Right cardiac atrium (tissue), 5 donors: ENCODE measurements at regions of chr12 and their contacts with region 1.

Region 1: GRCh38 chr12:54005853-54006686 is 2.7 kb upstream of the HOXC8 start:
- DNase-seq: peak; percentile 83 to 95 (median 94)
- ATAC-seq: peak; percentile 86 to 91
- H3K4me3 ChIP-seq: peak overlapping the region; percentile 50
- H3K27ac ChIP-seq: no peak overlapping the region
- H3K4me1 ChIP-seq: peaks cover 2% of the 10 kb centered on the region
- H3K27me3 ChIP-seq: no peaks in the 10 kb centered on the region

Region 2: GRCh38 chr12:54201001-54201794 is 195.1 kb after region 1 on chr12:
- intact Hi-C with region 1: loop called (anchors 2 to 5 kb)
- DNase-seq: peak; percentile 46 to 80 (median 76)
- ATAC-seq: peak; percentile 73 to 83
- H3K4me3 ChIP-seq: no peak overlapping the region
- H3K27ac ChIP-seq: no peak overlapping the region
- H3K4me1 ChIP-seq: no peaks in the 10 kb centered on the region
- H3K27me3 ChIP-seq: no peaks in the 10 kb centered on the region